ENCODE measurements at regions of chr6 and their contacts with region 1.

Region 1: GRCh38 chr6:16128759-16129622 is at the start of gene MYLIP:
- DNase-seq: peak; percentile 96 to 99 (median 97)
- ATAC-seq: peak; percentile 78
- H3K4me3 ChIP-seq: peak within 1 kb of the TSS; percentile 83
- H3K4me3 Mint-ChIP-seq: peak within 1 kb of the TSS; percentile 99
- H3K27ac ChIP-seq: peak within 1 kb of the TSS; percentile 89 to 92
- H3K27ac Mint-ChIP-seq: peak within 1 kb of the TSS; percentile 98
- H3K4me1 ChIP-seq: peaks cover 19% of the 10 kb centered on the region
- H3K4me1 Mint-ChIP-seq: peaks cover 37% of the 10 kb centered on the region
- H3K27me3 ChIP-seq: no peaks in the 10 kb centered on the region
- H3K27me3 Mint-ChIP-seq: no peaks in the 10 kb centered on the region
- CTCF ChIP-seq: peak; percentile 66
- total RNA-seq, gene MYLIP: 324 TPM

Region 2: DNA sequence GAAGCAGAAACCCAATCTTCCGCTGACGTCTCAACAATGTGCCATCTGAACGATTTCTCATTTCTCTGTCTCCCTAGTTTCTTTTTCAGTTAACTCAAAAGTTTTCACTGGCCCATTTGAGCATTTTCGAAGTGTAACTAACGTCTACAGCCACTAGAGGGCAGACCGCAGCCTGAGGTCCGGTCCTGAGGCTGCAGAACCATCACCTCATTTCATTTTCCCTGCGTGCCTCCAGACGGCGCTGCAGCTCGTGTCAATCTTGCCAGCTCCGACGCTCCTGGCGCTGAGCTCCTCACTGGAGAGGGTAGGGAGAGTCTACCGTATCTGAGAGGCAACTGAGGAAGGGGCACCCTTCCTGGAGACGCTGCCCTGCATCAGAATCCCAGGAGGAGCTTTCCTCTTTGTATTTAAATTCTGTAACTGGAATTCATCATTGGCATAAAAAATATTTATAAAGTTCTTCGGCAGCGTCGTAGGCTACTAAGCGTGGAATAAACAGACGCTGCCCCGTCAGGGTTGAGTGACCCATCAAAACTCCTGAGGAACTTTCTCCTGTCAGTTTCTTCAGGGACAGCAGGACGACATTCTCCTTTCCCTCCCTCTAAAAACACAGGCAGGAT is 437.6 kb before region 1 on chr6:
- CTCF ChIA-PET with region 1: interaction called, 3 read pairs
- POLR2A ChIA-PET with region 1: no interaction called
- intact Hi-C with region 1: loop called in 1 of 2 experiments (anchors 2 kb)
- DNase-seq: peak; percentile 60 to 92 (median 72)
- ATAC-seq: peak; percentile 100
- H3K4me3 ChIP-seq: no peak overlapping the region
- H3K4me3 Mint-ChIP-seq: no peak overlapping the region
- H3K27ac ChIP-seq: no peak overlapping the region
- H3K27ac Mint-ChIP-seq: no peak overlapping the region
- H3K4me1 ChIP-seq: peaks cover 3% of the 10 kb centered on the region
- H3K4me1 Mint-ChIP-seq: peaks cover 6% of the 10 kb centered on the region
- H3K27me3 ChIP-seq: no peaks in the 10 kb centered on the region
- H3K27me3 Mint-ChIP-seq: peaks cover 7% of the 10 kb centered on the region
- CTCF ChIP-seq: peak; percentile 100

Region 3: DNA sequence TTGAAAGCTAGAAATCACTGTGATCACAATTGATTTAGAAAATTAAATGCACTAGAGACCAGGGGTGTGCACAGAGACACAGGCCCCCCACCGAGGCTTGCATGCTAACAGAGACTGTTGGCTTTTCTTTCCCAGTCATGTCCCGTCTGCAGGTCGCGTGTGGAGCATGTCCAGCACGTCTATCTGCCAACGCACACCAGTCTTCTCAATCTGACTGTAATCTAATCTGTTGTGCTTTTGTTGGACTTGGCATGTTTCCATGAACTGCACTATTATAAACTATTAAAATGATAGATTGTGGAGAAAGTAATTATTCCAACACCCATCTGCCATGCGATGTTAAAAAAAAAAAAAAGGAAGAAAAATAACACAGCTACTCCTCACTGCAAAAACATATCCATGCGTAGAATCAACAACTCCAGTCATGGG is 17.6 kb after region 1 on chr6:
- CTCF ChIA-PET with region 1: interaction called, 14 read pairs
- POLR2A ChIA-PET with region 1: interaction called, 5 read pairs
- intact Hi-C with region 1: no loop called
- DNase-seq: no peak
- ATAC-seq: no peak
- H3K4me3 ChIP-seq: no peak overlapping the region
- H3K4me3 Mint-ChIP-seq: no peak overlapping the region
- H3K27ac ChIP-seq: no peak overlapping the region
- H3K27ac Mint-ChIP-seq: no peak overlapping the region
- H3K4me1 ChIP-seq: peaks cover 7% of the 10 kb centered on the region
- H3K4me1 Mint-ChIP-seq: peaks cover 66% of the 10 kb centered on the region
- H3K27me3 ChIP-seq: no peaks in the 10 kb centered on the region
- H3K27me3 Mint-ChIP-seq: no peaks in the 10 kb centered on the region
- CTCF ChIP-seq: no peak

Region 4: GRCh38 chr6:16183187-16183664 is 54.2 kb after region 1 on chr6:
- CTCF ChIA-PET with region 1: interaction called, 14 read pairs
- POLR2A ChIA-PET with region 1: interaction called, 68 read pairs
- intact Hi-C with region 1: loop called (anchors 1 to 2 kb)
- DNase-seq: peak in 3 of 14 experiments; percentile 48 to 63 (median 60)
- ATAC-seq: peak; percentile 24
- H3K4me3 ChIP-seq: no peak overlapping the region
- H3K4me3 Mint-ChIP-seq: no peak overlapping the region
- H3K27ac ChIP-seq: no peak overlapping the region
- H3K27ac Mint-ChIP-seq: peak overlapping the region; percentile 37
- H3K4me1 ChIP-seq: peaks cover 30% of the 10 kb centered on the region
- H3K4me1 Mint-ChIP-seq: peaks cover 42% of the 10 kb centered on the region
- H3K27me3 ChIP-seq: no peaks in the 10 kb centered on the region
- H3K27me3 Mint-ChIP-seq: no peaks in the 10 kb centered on the region
- CTCF ChIP-seq: peak; percentile 71

Region 5: GRCh38 chr6:16319813-16320532 is 191.0 kb after region 1 on chr6:
- CTCF ChIA-PET with region 1: no interaction called
- POLR2A ChIA-PET with region 1: interaction called, 7 read pairs
- intact Hi-C with region 1: loop called in 1 of 2 experiments (anchors 10 kb)
- DNase-seq: peak; percentile 41 to 89 (median 62)
- ATAC-seq: peak; percentile 55
- H3K4me3 ChIP-seq: peak overlapping the region; percentile 40
- H3K4me3 Mint-ChIP-seq: peak overlapping the region; percentile 70
- H3K27ac ChIP-seq: peak overlapping the region; percentile 63 to 93
- H3K27ac Mint-ChIP-seq: peak overlapping the region; percentile 94
- H3K4me1 ChIP-seq: peaks cover 82% of the 10 kb centered on the region
- H3K4me1 Mint-ChIP-seq: peaks cover 78% of the 10 kb centered on the region
- H3K27me3 ChIP-seq: no peaks in the 10 kb centered on the region
- H3K27me3 Mint-ChIP-seq: no peaks in the 10 kb centered on the region
- CTCF ChIP-seq: no peak

Region 6: DNA sequence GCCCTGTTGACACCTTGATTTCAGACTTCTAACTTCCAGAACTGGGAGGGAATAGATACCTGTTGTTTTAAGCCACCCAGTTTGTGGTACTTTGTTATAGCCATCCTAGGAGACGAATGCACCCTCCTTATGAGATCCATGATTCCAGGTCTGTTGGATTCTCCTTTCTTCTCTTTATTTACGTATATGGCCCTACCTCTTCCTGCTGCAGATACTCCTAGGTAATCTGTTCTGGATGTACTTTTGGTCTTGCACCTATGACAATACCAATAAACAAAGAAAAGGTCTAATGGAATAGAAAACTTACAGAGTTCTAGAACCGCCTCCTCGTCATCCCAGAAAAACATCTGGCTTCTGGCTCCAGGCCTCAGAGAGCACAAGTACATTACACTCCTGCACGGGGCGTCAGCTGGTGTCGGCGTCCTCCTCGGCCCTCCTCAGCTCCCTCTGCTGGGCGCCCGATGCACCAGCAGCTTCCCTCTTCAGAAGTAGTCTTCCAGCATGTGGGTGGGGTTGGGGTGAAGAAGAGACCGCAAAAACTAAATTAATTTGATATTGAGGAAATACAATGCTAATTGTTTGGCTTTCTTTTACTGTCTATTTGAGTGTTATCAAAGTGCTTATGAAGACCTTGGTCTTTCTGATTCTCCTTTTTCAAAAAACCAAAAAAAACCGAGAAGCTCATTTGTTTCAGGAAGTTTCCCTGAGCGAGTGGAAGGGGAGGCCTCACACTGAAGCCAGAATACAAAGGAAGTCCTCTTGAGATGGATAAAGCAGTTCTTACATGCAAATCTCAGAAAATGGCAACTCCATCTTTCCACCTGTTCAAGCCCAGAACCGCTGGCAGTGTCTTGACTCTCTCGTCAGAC is 641.9 kb after region 1 on chr6:
- CTCF ChIA-PET with region 1: no interaction called
- POLR2A ChIA-PET with region 1: no interaction called
- intact Hi-C with region 1: loop called (anchors 5 to 10 kb)
- DNase-seq: peak; percentile 65 to 90 (median 73)
- ATAC-seq: peak; percentile 79
- H3K4me3 ChIP-seq: no peak overlapping the region
- H3K4me3 Mint-ChIP-seq: no peak overlapping the region
- H3K27ac ChIP-seq: no peak overlapping the region
- H3K27ac Mint-ChIP-seq: peak overlapping the region; percentile 40
- H3K4me1 ChIP-seq: peaks cover 20% of the 10 kb centered on the region
- H3K4me1 Mint-ChIP-seq: peaks cover 45% of the 10 kb centered on the region
- H3K27me3 ChIP-seq: no peaks in the 10 kb centered on the region
- H3K27me3 Mint-ChIP-seq: no peaks in the 10 kb centered on the region
- CTCF ChIP-seq: peak; percentile 96

Region 7: DNA sequence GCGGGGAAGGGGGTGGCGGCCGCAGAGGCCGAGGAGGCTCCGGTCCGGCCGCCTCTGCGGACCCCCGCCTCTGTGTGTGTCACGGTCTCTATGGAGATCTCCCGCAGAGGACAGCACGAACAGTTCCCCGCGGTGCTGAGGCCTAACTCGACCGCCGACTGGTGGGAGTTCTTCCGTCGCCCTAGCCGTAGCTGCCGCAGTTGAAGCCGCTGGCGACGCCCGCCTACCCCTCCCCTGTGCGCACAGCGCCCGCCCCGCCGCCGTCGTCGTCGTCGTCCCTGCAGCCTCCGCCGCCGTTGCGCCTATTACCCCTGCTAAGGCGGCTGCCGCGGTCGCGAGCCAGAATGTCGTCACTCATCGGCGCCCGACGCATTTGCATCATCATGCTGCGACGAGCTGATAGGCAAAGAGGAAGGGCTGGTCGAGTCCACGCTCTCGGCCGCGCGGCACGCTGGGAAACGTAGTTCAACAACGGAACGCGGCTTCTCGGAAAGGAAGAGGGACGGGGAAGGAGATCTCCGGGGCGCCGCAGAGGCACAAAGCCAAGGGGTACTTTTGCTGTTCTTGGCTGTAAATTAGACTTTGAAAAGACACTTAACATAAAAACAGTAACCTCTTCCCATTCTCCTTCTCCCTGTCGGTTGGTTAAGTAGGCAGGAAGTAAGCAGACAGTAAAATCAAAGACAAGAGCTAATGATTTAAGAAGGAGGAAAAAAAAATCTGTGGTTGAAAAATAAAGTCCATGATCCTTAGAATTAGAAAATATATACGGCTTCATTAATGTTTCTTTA is 1577.8 kb after region 1 on chr6 and contains the start of gene NUP153:
- CTCF ChIA-PET with region 1: no interaction called
- POLR2A ChIA-PET with region 1: no interaction called
- intact Hi-C with region 1: loop called in 1 of 2 experiments (anchors 10 kb)
- DNase-seq: peak; percentile 98 to 100 (median 100)
- ATAC-seq: peak; percentile 79
- H3K4me3 ChIP-seq: peak within 1 kb of the TSS; percentile 82
- H3K4me3 Mint-ChIP-seq: peak within 1 kb of the TSS; percentile 95
- H3K27ac ChIP-seq: peak within 1 kb of the TSS; percentile 98 to 99
- H3K27ac Mint-ChIP-seq: peak within 1 kb of the TSS; percentile 93
- H3K4me1 ChIP-seq: peaks cover 41% of the 10 kb centered on the region
- H3K4me1 Mint-ChIP-seq: peaks cover 48% of the 10 kb centered on the region
- H3K27me3 ChIP-seq: no peaks in the 10 kb centered on the region
- H3K27me3 Mint-ChIP-seq: no peaks in the 10 kb centered on the region
- CTCF ChIP-seq: no peak
- total RNA-seq, gene NUP153: 58.3 to 61.0 TPM

Measured in CD4-positive, alpha-beta T cell (primary cell).